B cell (primary cell): ENCODE measurements at regions of chr17 and their contacts with region 1.

Region 1: DNA sequence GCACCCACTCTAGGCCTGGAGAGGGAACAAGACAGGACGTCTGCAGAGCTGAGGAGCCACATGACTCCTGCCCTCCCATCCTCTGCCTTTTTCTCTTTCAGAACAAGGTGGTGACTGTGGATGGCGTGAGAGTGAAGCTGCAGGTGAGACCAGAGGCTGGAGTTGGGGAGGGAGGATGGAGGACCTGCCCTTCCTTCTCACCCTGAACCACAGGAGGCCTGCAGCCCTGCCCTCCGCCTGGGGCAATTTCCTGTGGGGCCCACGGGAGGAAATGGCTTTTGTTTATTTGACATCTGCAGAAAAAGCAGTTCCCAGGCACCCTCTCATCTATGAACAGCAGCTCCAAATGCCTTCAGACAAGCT is 5.1 kb downstream of the RAB37 start:
- DNase-seq: peak; percentile 67
- ATAC-seq: peak; percentile 56
- H3K4me3 ChIP-seq: peak overlapping the region in 2 of 5 experiments; percentile 21 to 34
- H3K4me3 Mint-ChIP-seq: peak overlapping the region; percentile 82
- H3K27ac ChIP-seq: peak overlapping the region; percentile 42 to 62
- H3K27ac Mint-ChIP-seq: peak overlapping the region; percentile 96
- H3K4me1 ChIP-seq: peaks cover 69 to 82% of the 10 kb centered on the region in 2 donors
- H3K4me1 Mint-ChIP-seq: peaks cover 71% of the 10 kb centered on the region
- H3K27me3 ChIP-seq: no peaks in the 10 kb centered on the region
- H3K27me3 Mint-ChIP-seq: no peaks in the 10 kb centered on the region
- CTCF ChIP-seq: no peak

Region 2: DNA sequence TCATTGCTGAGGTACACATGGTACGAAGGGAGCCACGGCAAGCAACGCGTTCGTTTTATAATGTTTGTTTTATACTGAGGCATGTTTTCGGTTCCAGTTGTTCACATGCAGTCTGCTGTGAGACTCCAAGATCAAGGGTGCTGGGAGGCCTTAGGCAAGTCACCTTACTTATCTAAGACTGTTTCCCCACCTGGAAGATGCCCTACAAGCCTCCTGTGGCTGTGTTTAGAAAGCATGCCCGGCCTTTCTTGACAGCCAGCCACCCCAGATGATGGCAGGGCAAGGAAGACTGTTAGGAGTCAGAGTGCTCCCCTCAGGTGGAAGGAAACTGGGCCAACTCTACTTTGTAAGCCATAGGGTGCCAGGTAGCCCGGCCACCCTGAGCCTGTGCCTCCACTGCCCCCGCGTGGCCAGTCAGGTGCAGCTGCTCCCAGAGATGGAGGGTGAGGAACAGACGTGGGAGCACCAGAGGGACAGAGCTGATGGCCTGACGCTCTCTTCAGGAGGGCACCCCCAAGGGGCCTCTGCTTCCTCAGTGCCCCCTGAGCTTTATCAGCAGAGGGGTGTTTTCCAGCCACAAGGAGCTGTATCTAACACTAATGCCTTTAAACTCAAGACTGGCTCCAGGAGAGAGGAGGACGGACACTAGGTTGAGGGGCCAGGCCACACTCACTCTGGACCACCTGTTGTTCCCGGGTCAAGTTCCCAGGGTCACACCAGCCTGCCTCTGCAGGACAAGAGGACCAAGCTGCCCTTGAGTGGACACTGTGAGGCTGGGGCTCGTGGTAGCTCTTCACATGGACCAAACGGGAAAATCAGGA is 28.6 kb after region 1 on chr17:
- CTCF ChIA-PET with region 1: interaction called, 76 read pairs
- POLR2A ChIA-PET with region 1: interaction called, 18 read pairs
- intact Hi-C with region 1: loop called (anchors 1 kb)
- DNase-seq: peak; percentile 78
- ATAC-seq: peak; percentile 94
- H3K4me3 ChIP-seq: no peak overlapping the region
- H3K4me3 Mint-ChIP-seq: no peak overlapping the region
- H3K27ac ChIP-seq: no peak overlapping the region
- H3K27ac Mint-ChIP-seq: peak overlapping the region; percentile 50
- H3K4me1 ChIP-seq: peaks cover 6 to 7% of the 10 kb centered on the region in 2 donors
- H3K4me1 Mint-ChIP-seq: peaks cover 17% of the 10 kb centered on the region
- H3K27me3 ChIP-seq: no peaks in the 10 kb centered on the region
- H3K27me3 Mint-ChIP-seq: no peaks in the 10 kb centered on the region
- CTCF ChIP-seq: peak; percentile 75

Region 3: DNA sequence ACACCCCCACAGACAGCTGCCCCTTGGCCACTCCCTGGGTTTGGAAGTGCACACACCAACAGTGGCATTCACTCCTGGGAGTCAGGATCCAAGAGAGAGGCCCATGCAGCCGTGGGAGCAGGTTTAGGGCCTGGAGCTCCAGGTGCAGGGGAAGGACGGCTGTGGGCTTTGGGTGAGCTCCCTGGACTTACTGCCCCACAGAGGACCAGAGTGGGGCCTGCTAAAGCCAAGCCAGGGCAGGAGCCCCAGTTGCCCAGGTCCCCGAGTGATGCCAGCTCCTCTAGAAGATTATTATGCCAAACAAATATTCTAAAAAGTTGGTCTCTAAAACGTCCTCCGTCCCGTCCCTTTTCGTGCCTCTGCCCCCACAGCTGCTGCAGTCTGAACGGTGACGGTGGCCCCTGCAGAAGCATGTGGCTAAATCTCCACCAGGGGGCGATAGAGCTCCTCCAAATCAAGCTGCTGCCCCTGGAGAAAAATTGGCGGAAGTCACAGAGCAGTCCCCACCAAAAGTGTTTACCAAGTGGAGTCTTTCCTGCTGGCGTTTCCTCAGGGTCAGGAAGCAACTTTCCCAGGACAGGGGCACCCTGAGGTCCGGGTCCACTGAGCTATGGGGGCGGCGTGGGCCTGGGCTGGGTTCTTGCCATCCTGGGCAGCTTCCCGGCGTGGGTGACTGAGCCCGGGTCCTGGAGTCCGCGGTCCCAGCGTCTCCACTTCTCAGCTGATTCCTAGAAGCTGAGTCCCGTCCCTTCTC is 371.8 kb after region 1 on chr17:
- CTCF ChIA-PET with region 1: no interaction called
- POLR2A ChIA-PET with region 1: no interaction called
- intact Hi-C with region 1: no loop called
- DNase-seq: peak; percentile 94
- ATAC-seq: peak; percentile 55
- H3K4me3 ChIP-seq: peak overlapping the region; percentile 51 to 81 (median 60)
- H3K4me3 Mint-ChIP-seq: peak overlapping the region; percentile 93
- H3K27ac ChIP-seq: peak overlapping the region; percentile 49 to 72
- H3K27ac Mint-ChIP-seq: peak overlapping the region; percentile 94
- H3K4me1 ChIP-seq: peaks cover 55 to 67% of the 10 kb centered on the region in 2 donors
- H3K4me1 Mint-ChIP-seq: peaks cover 63% of the 10 kb centered on the region
- H3K27me3 ChIP-seq: no peaks in the 10 kb centered on the region
- H3K27me3 Mint-ChIP-seq: no peaks in the 10 kb centered on the region
- CTCF ChIP-seq: peak; percentile 88